B cell (primary cell): ENCODE measurements at regions of chrX and their contacts with region 1.

Region 1: GRCh38 chrX:129957241-129958082 is 25.0 kb upstream of the BCORL1 start:
- DNase-seq: peak; percentile 77
- ATAC-seq: peak; percentile 79
- H3K4me3 ChIP-seq: peak overlapping the region in 4 of 5 experiments; percentile 43 to 56 (median 51)
- H3K4me3 Mint-ChIP-seq: peak overlapping the region; percentile 78
- H3K27ac ChIP-seq: peak overlapping the region; percentile 33 to 67
- H3K27ac Mint-ChIP-seq: peak overlapping the region; percentile 78
- H3K4me1 ChIP-seq: peaks cover 13 to 40% of the 10 kb centered on the region in 2 donors
- H3K4me1 Mint-ChIP-seq: peaks cover 41% of the 10 kb centered on the region
- H3K27me3 ChIP-seq: no peaks in the 10 kb centered on the region
- H3K27me3 Mint-ChIP-seq: no peaks in the 10 kb centered on the region
- CTCF ChIP-seq: no peak

Region 2: DNA sequence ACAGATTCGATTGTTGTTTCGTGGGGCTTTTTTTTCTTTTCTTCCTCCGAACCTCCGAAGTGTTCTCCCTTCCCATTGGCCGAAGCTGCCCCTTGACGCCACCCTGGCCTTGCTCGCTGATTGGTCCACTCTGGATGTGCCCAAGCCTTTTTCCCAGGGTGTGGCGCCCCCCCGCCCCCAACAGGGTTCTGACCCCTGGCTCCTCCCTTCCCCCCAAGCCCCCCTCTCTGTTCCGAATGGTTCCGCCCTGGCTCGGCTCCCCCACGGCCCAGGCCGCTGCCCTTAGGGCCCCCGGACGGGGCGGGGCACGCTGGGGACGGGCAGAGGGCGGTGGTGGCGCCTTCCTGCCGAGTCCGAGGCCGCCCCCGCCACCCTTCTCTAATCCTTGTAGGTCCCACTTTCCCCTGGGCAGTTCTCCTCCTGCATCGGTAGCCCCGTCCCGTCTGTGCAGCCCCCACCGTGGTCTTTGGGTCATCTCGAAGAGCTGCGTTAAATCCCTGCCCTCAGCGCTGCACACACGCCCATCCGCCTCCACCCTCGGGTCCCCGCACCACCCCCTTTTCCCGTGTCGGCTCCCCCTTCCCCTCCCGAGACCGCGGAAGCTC is 25.9 kb before region 1 on chrX:
- CTCF ChIA-PET with region 1: interaction called, 3 read pairs
- POLR2A ChIA-PET with region 1: interaction called, 6 read pairs
- intact Hi-C with region 1: loop called (anchors 1 kb)
- DNase-seq: peak; percentile 89
- ATAC-seq: peak; percentile 75
- H3K4me3 ChIP-seq: peak overlapping the region in 4 of 5 experiments; percentile 65 to 72 (median 71)
- H3K4me3 Mint-ChIP-seq: peak overlapping the region; percentile 90
- H3K27ac ChIP-seq: peak overlapping the region; percentile 80 to 82
- H3K27ac Mint-ChIP-seq: peak overlapping the region; percentile 98
- H3K4me1 ChIP-seq: peaks cover 0 to 5% of the 10 kb centered on the region in 2 donors
- H3K4me1 Mint-ChIP-seq: peaks cover 8% of the 10 kb centered on the region
- H3K27me3 ChIP-seq: no peaks in the 10 kb centered on the region
- H3K27me3 Mint-ChIP-seq: no peaks in the 10 kb centered on the region
- CTCF ChIP-seq: no peak

Region 3: DNA sequence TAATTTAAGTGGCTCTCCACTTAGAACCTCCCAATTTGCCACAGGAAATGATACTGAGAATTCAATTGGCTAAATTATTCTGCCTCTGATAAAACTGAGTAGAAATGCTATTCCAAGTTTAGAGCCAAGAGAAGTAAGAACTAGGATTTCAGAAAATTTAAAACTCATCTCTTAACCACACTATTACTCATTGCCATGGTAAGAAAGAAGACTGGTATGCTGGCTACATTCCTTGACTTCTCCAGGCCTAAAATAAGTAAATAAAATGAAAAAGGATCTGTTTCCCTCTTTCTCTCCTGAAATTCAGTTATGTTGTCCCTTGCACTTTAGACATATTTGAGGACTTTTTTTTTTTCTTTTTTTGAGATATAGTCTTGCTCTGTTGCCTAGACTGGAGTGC is 288.0 kb after region 1 on chrX:
- CTCF ChIA-PET with region 1: no interaction called
- POLR2A ChIA-PET with region 1: interaction called, 10 read pairs
- intact Hi-C with region 1: no loop called
- DNase-seq: no peak
- ATAC-seq: no peak
- H3K4me3 ChIP-seq: no peak overlapping the region
- H3K4me3 Mint-ChIP-seq: no peak overlapping the region
- H3K27ac ChIP-seq: no peak overlapping the region
- H3K27ac Mint-ChIP-seq: no peak overlapping the region
- H3K4me1 ChIP-seq: no peaks in the 10 kb centered on the region
- H3K4me1 Mint-ChIP-seq: no peaks in the 10 kb centered on the region
- H3K27me3 ChIP-seq: no peaks in the 10 kb centered on the region
- H3K27me3 Mint-ChIP-seq: no peaks in the 10 kb centered on the region
- CTCF ChIP-seq: no peak